Thyroid gland (tissue), 4 donors: ENCODE measurements at regions of chr4 and their contacts with region 1.

Region 1: DNA sequence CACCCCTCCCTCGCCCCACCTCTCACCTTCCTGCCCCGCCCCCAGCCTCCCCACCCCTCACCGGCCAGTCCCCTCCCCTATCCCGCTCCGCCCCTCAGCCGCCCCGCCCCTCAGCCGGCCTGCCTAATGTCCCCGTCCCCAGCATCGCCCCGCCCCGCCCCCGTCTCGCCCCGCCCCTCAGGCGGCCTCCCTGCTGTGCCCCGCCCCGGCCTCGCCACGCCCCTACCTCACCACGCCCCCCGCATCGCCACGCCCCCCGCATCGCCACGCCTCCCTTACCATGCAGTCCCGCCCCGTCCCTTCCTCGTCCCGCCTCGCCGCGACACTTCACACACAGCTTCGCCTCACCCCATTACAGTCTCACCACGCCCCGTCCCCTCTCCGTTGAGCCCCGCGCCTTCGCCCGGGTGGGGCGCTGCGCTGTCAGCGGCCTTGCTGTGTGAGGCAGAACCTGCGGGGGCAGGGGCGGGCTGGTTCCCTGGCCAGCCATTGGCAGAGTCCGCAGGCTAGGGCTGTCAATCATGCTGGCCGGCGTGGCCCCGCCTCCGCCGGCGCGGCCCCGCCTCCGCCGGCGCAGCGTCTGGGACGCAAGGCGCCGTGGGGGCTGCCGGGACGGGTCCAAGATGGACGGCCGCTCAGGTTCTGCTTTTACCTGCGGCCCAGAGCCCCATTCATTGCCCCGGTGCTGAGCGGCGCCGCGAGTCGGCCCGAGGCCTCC is at the starts of genes HTT and HTT-AS:
- DNase-seq: peak; percentile 96 to 97
- H3K4me3 ChIP-seq: peak within 1 kb of the TSS; percentile 71 to 79 (median 75)
- H3K27ac ChIP-seq: peak within 1 kb of the TSS; percentile 79 to 92 (median 86)
- H3K4me1 ChIP-seq: peaks cover 19 to 37% of the 10 kb centered on the region in 2 donors
- H3K27me3 ChIP-seq: no peaks in the 10 kb centered on the region
- CTCF ChIP-seq: peak in 1 of 6 experiments; percentile 26
- POLR2A ChIP-seq: peak in 1 of 2 donors; percentile 80
- total RNA-seq, gene HTT: 49.6 to 155 (median 83.1) TPM
- total RNA-seq, gene HTT-AS: not detected

Region 2: GRCh38 chr4:2878346-2878745 is 195.9 kb before region 1 on chr4:
- intact Hi-C with region 1: no loop called
- DNase-seq: no peak
- H3K4me3 ChIP-seq: no peak overlapping the region
- H3K27ac ChIP-seq: no peak overlapping the region
- H3K4me1 ChIP-seq: peaks cover 0 to 9% of the 10 kb centered on the region in 2 donors
- H3K27me3 ChIP-seq: no peaks in the 10 kb centered on the region
- CTCF ChIP-seq: no peak
- POLR2A ChIP-seq: no peak

Region 3: DNA sequence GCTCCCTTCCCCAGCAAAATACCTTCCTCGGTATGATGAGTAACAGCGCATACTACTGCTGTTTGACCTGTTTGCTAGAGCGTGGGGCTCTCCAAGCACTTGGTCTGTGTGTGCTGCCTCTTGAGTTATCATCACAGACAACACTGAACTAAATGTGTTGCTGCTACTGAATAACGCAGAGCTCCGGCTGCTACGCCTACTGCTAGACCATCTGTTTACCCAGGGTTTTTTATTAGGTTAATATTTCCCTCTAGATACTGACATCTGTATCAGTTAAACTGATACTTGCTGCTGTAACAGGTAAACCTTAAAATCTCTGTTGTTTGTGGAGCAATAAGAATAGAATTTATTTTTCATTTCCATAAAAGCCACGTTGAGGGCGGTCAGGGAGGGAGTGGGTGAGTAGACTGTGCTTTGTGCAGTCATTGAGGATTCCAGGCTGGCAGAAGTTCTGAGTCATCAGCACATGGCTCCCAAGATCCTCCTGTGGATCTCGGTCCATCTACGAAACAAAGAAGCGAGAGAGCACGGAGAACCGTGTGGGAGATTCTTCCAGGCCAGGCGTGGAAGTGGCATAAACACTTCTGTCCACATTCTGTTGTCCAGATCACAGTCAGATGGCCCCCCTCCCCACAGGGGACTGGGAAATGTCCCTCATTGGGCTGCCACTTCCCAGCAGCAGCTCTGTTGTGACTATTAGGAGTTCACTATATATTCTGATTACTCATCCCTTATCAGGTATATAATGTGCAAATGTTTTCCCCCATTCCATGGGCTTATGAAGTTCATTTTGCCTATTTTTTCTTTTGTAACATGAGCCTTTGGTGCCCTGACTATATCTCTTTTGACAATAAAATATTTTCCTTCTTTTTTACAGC is 96.8 kb before region 1 on chr4:
- intact Hi-C with region 1: no loop called
- DNase-seq: peak; percentile 77 to 83
- H3K4me3 ChIP-seq: no peak overlapping the region
- H3K27ac ChIP-seq: peak overlapping the region; percentile 18 to 78 (median 66)
- H3K4me1 ChIP-seq: peaks cover 5 to 16% of the 10 kb centered on the region in 2 donors
- H3K27me3 ChIP-seq: no peaks in the 10 kb centered on the region
- CTCF ChIP-seq: no peak
- POLR2A ChIP-seq: peak in 1 of 2 donors; percentile 7

Region 4: DNA sequence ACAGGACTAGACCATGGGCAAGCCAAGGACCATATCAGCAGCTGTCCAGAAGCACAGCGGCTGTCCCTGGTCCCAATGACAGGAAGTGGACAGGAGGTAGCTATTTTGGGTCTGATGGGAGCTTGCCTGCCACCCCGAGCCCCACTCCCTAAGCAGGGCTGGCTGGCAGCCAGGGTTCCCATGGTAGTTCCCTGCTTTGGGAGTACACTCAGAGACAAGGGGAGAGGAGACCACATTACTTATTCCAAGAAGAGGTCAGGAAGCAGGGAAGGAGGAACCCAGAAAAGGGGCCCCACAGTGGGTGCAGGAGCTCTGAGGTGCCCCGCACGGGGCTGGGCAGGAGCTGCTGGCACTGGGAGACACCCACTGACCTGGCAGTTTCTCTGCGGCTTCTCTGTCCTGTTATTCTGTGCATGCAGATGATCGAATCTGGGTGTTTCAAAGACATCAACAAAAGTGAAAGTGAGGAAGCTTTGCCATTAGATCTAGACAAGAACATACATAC is 36.2 kb before region 1 on chr4:
- intact Hi-C with region 1: no loop called
- DNase-seq: peak in 1 of 2 donors; percentile 20
- H3K4me3 ChIP-seq: no peak overlapping the region
- H3K27ac ChIP-seq: no peak overlapping the region
- H3K4me1 ChIP-seq: peaks cover 4 to 7% of the 10 kb centered on the region in 2 donors
- H3K27me3 ChIP-seq: no peaks in the 10 kb centered on the region
- CTCF ChIP-seq: no peak
- POLR2A ChIP-seq: no peak

Region 5: GRCh38 chr4:3292571-3293400 is 218.5 kb after region 1 on chr4 and contains the start of gene RGS12:
- intact Hi-C with region 1: loop called (anchors 5 kb)
- DNase-seq: peak; percentile 96 to 97
- H3K4me3 ChIP-seq: peak within 1 kb of the TSS; percentile 85 to 90 (median 90)
- H3K27ac ChIP-seq: peak within 1 kb of the TSS; percentile 90 to 96 (median 92)
- H3K4me1 ChIP-seq: peaks cover 9 to 18% of the 10 kb centered on the region in 2 donors
- H3K27me3 ChIP-seq: no peaks in the 10 kb centered on the region
- CTCF ChIP-seq: no peak
- POLR2A ChIP-seq: peak in 1 of 2 donors; percentile 84
- total RNA-seq, gene RGS12: 14.6 to 25.1 (median 20.9) TPM